Natural killer cell (primary cell): ENCODE measurements at regions of chr1 and their contacts with region 1.

Region 1: DNA sequence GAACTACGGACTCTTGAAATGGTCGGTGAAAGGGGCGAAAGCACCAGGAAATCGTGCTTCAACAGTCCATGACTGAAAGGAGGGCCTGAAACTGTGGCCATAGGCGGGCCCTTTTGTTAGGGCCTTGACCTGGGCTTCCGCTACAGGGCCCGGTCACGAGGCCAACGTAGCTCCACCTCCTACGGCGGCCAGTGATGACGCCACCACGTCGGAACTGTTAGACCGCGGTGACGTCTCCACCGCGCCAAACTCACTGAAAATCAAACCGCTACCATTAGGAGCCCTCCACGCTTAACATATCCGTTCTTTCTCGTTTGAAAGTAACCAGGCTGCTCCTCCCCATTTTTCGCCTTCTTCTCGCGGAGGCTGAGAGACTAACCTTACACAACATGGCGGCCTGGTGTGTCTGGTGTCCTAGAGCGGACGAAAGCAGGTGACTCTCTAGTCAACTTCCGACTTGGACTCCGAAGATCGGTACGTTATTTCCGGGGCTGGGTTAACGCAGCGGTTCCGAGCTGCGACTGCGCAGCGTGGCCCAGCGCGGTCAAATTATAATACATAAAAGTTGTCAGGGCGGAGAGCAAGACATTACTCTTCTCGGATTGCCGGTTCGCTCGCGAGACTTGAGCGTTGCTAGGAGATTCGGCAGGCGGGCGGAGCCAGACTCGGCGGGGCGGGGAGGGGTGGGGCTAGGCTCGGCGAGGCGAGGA is 376 bp upstream of the CACYBP start:
- DNase-seq: peak; percentile 94 to 99
- ATAC-seq: peak; percentile 77 to 91 (median 79)
- H3K4me3 ChIP-seq: peak overlapping the region; percentile 81
- H3K4me3 Mint-ChIP-seq: no peak overlapping the region
- H3K27ac ChIP-seq: peak overlapping the region; percentile 96
- H3K27ac Mint-ChIP-seq: no peak overlapping the region
- H3K4me1 ChIP-seq: peaks cover 7% of the 10 kb centered on the region
- H3K4me1 Mint-ChIP-seq: peaks cover 33 to 34% of the 10 kb centered on the region in 2 donors
- H3K27me3 ChIP-seq: no peaks in the 10 kb centered on the region
- H3K27me3 Mint-ChIP-seq: no peaks in the 10 kb centered on the region
- CTCF ChIP-seq: no peak

Region 2: GRCh38 chr1:174799136-174799479 is 200.3 kb before region 1 on chr1:
- intact Hi-C with region 1: loop called (anchors 1 kb)
- DNase-seq: peak in 1 of 2 donors; percentile 5
- ATAC-seq: no peak
- H3K4me3 ChIP-seq: peak overlapping the region; percentile 70
- H3K4me3 Mint-ChIP-seq: no peak overlapping the region
- H3K27ac ChIP-seq: peak overlapping the region; percentile 83
- H3K27ac Mint-ChIP-seq: no peak overlapping the region
- H3K4me1 ChIP-seq: peaks cover 6% of the 10 kb centered on the region
- H3K4me1 Mint-ChIP-seq: peaks cover 14 to 16% of the 10 kb centered on the region in 2 donors
- H3K27me3 ChIP-seq: no peaks in the 10 kb centered on the region
- H3K27me3 Mint-ChIP-seq: no peaks in the 10 kb centered on the region
- CTCF ChIP-seq: no peak

Region 3: DNA sequence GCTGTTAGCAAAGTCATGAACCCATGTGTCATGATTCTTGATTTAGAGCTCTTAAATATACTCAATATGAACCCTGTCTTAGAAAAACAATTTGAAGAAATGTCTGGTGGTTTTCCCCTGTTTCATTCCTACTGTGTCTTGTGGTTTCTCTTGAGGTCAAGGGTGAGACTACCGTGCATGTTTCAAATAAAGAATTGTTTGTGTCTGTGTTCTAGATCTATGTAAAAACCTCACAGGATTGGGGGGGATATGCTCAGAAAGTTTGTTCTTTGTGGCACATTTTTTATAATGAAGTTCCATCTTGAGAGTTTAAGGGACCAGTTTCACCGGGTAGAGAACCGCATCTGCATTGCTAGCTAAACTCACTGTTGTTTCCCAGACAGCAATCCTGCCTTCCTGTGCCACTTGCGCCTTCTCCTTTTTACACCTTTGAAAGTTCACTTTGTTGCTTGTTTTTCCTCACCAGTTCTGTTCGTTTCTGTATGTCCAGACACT is 30.6 kb before region 1 on chr1:
- intact Hi-C with region 1: loop called (anchors 1 kb)
- DNase-seq: peak in 1 of 2 donors; percentile 89
- ATAC-seq: peak; percentile 36 to 65 (median 53)
- H3K4me3 ChIP-seq: no peak overlapping the region
- H3K4me3 Mint-ChIP-seq: peak overlapping the region; percentile 88
- H3K27ac ChIP-seq: peak overlapping the region; percentile 67
- H3K27ac Mint-ChIP-seq: peak overlapping the region; percentile 90 to 99
- H3K4me1 ChIP-seq: peaks cover 39% of the 10 kb centered on the region
- H3K4me1 Mint-ChIP-seq: peaks cover 73 to 76% of the 10 kb centered on the region in 2 donors
- H3K27me3 ChIP-seq: no peaks in the 10 kb centered on the region
- H3K27me3 Mint-ChIP-seq: no peaks in the 10 kb centered on the region
- CTCF ChIP-seq: no peak

Region 4: GRCh38 chr1:175023043-175023921 is 23.9 kb after region 1 on chr1 and contains the start of gene MRPS14:
- intact Hi-C with region 1: loop called (anchors 1 kb)
- DNase-seq: peak; percentile 95 to 99
- ATAC-seq: peak; percentile 91 to 98 (median 94)
- H3K4me3 ChIP-seq: peak within 1 kb of the TSS; percentile 82
- H3K4me3 Mint-ChIP-seq: peak within 1 kb of the TSS; percentile 97
- H3K27ac ChIP-seq: peak within 1 kb of the TSS; percentile 88
- H3K27ac Mint-ChIP-seq: peak within 1 kb of the TSS; percentile 91 to 94
- H3K4me1 ChIP-seq: peaks cover 12% of the 10 kb centered on the region
- H3K4me1 Mint-ChIP-seq: peaks cover 25 to 27% of the 10 kb centered on the region in 2 donors
- H3K27me3 ChIP-seq: no peaks in the 10 kb centered on the region
- H3K27me3 Mint-ChIP-seq: no peaks in the 10 kb centered on the region
- CTCF ChIP-seq: no peak
- total RNA-seq, gene MRPS14: 11.5 to 13.2 (median 12.0) TPM

Region 5: GRCh38 chr1:175530183-175530582 is 530.8 kb after region 1 on chr1:
- intact Hi-C with region 1: no loop called
- DNase-seq: no peak
- ATAC-seq: no peak
- H3K4me3 ChIP-seq: no peak overlapping the region
- H3K4me3 Mint-ChIP-seq: no peak overlapping the region
- H3K27ac ChIP-seq: no peak overlapping the region
- H3K27ac Mint-ChIP-seq: no peak overlapping the region
- H3K4me1 ChIP-seq: no peaks in the 10 kb centered on the region
- H3K4me1 Mint-ChIP-seq: no peaks in the 10 kb centered on the region
- H3K27me3 ChIP-seq: no peaks in the 10 kb centered on the region
- H3K27me3 Mint-ChIP-seq: peaks cover 0 to 3% of the 10 kb centered on the region in 2 donors
- CTCF ChIP-seq: no peak